Naive thymus-derived CD4-positive, alpha-beta T cell (primary cell): ENCODE measurements at regions of chr6 and their contacts with region 1.

Region 1: GRCh38 chr6:135535989-135536414 is 38.5 kb upstream of the AHI1 start:
- DNase-seq: peak in 7 of 9 donors; percentile 4 to 54 (median 36)
- ATAC-seq: peak; percentile 60
- H3K4me3 ChIP-seq: no peak overlapping the region
- H3K4me3 Mint-ChIP-seq: peak overlapping the region in 8 of 10 donors; percentile 48 to 80 (median 69)
- H3K27ac ChIP-seq: no peak overlapping the region
- H3K27ac Mint-ChIP-seq: peak overlapping the region in 3 of 9 donors; percentile 34 to 80 (median 41)
- H3K4me1 ChIP-seq: peaks cover 4 to 12% of the 10 kb centered on the region in 2 donors
- H3K4me1 Mint-ChIP-seq: peaks cover 0 to 46% (median 9%) of the 10 kb centered on the region in 7 donors
- H3K27me3 ChIP-seq: no peaks in the 10 kb centered on the region
- H3K27me3 Mint-ChIP-seq: peaks cover 0 to 4% (median 0%) of the 10 kb centered on the region in 5 donors

Region 2: DNA sequence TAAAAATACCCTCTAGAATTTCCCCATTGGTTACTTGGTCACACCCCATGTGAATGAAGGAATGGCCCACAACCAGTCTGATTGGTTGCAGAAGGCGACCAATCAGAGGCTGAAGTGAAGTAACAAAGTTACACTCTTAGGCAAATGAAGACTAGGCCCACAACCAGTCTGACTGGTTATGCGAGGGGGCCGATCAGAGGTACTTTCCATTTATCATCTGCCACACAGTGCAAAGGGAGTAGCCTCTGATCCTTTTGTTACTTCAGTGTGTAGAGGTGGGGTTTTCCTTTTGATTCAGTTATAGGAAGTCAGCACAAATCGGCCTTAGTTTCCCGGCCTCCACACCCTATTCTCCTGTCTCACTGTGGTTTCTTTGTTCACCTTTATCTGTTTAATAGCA is 1156.9 kb before region 1 on chr6:
- CTCF ChIA-PET with region 1: no interaction called
- POLR2A ChIA-PET with region 1: no interaction called
- intact Hi-C with region 1: no loop called
- DNase-seq: peak in 2 of 9 donors; percentile 38 to 39
- ATAC-seq: peak; percentile 78
- H3K4me3 ChIP-seq: no peak overlapping the region
- H3K4me3 Mint-ChIP-seq: peak overlapping the region in 5 of 10 donors; percentile 31 to 66 (median 43)
- H3K27ac ChIP-seq: no peak overlapping the region
- H3K27ac Mint-ChIP-seq: peak overlapping the region in 7 of 9 donors; percentile 26 to 84 (median 56)
- H3K4me1 ChIP-seq: peaks cover 14 to 17% of the 10 kb centered on the region in 2 donors
- H3K4me1 Mint-ChIP-seq: peaks cover 15 to 42% (median 41%) of the 10 kb centered on the region in 7 donors
- H3K27me3 ChIP-seq: no peaks in the 10 kb centered on the region
- H3K27me3 Mint-ChIP-seq: no peaks in the 10 kb centered on the region

Region 3: GRCh38 chr6:135280375-135281136 is 255.4 kb before region 1 on chr6:
- CTCF ChIA-PET with region 1: no interaction called
- POLR2A ChIA-PET with region 1: no interaction called
- intact Hi-C with region 1: no loop called
- DNase-seq: no peak
- ATAC-seq: peak; percentile 38
- H3K4me3 ChIP-seq: no peak overlapping the region
- H3K4me3 Mint-ChIP-seq: no peak overlapping the region
- H3K27ac ChIP-seq: no peak overlapping the region
- H3K27ac Mint-ChIP-seq: no peak overlapping the region
- H3K4me1 ChIP-seq: no peaks in the 10 kb centered on the region
- H3K4me1 Mint-ChIP-seq: peaks cover 0 to 5% (median 0%) of the 10 kb centered on the region in 7 donors
- H3K27me3 ChIP-seq: no peaks in the 10 kb centered on the region
- H3K27me3 Mint-ChIP-seq: peaks cover 0 to 18% (median 0%) of the 10 kb centered on the region in 5 donors

Region 4: GRCh38 chr6:135497412-135498269 is 38.4 kb before region 1 on chr6 and contains the start of gene AHI1:
- CTCF ChIA-PET with region 1: interaction called, 3 read pairs
- POLR2A ChIA-PET with region 1: interaction called, 3 read pairs
- intact Hi-C with region 1: loop called in 1 of 2 experiments (anchors 5 kb)
- DNase-seq: peak; percentile 65 to 94 (median 85)
- ATAC-seq: peak; percentile 89
- H3K4me3 ChIP-seq: peak within 1 kb of the TSS; percentile 64
- H3K4me3 Mint-ChIP-seq: peak within 1 kb of the TSS in 4 of 10 donors; percentile 32 to 53 (median 37)
- H3K27ac ChIP-seq: peak within 1 kb of the TSS; percentile 95
- H3K27ac Mint-ChIP-seq: no peak within 1 kb of the TSS
- H3K4me1 ChIP-seq: peaks cover 0 to 5% of the 10 kb centered on the region in 2 donors
- H3K4me1 Mint-ChIP-seq: peaks cover 4 to 19% (median 9%) of the 10 kb centered on the region in 7 donors
- H3K27me3 ChIP-seq: no peaks in the 10 kb centered on the region
- H3K27me3 Mint-ChIP-seq: peaks cover 0 to 3% (median 0%) of the 10 kb centered on the region in 5 donors
- total RNA-seq, gene AHI1: 12.5 to 31.3 (median 26.3) TPM

Region 5: GRCh38 chr6:135519348-135519747 is 16.7 kb before region 1 on chr6:
- CTCF ChIA-PET with region 1: no interaction called
- POLR2A ChIA-PET with region 1: no interaction called
- intact Hi-C with region 1: no loop called
- DNase-seq: no peak
- ATAC-seq: no peak
- H3K4me3 ChIP-seq: no peak overlapping the region
- H3K4me3 Mint-ChIP-seq: no peak overlapping the region
- H3K27ac ChIP-seq: no peak overlapping the region
- H3K27ac Mint-ChIP-seq: no peak overlapping the region
- H3K4me1 ChIP-seq: no peaks in the 10 kb centered on the region
- H3K4me1 Mint-ChIP-seq: peaks cover 0 to 11% (median 0%) of the 10 kb centered on the region in 7 donors
- H3K27me3 ChIP-seq: no peaks in the 10 kb centered on the region
- H3K27me3 Mint-ChIP-seq: no peaks in the 10 kb centered on the region

Region 6: DNA sequence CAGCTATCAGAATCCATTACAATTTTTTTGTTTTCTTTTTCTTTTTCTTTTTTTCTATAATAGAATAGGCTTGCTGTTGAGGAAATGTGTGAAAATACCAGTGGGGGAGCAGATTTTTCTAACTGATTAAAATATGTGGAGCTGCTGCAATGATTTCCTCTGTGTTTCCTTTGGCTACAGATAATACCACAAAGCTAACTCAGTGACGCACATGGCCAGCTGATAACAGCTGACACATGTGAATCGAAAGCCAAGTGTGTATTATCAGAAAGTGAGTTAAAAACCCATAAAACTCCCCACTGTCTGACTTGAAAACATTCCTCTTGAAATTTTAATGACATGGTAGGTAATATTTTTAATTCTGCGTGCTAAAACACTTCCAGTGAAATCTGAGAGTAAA is 32.4 kb after region 1 on chr6:
- CTCF ChIA-PET with region 1: no interaction called
- POLR2A ChIA-PET with region 1: no interaction called
- intact Hi-C with region 1: loop called in 1 of 2 experiments (anchors 1 kb)
- DNase-seq: peak in 8 of 9 donors; percentile 27 to 63 (median 44)
- ATAC-seq: peak; percentile 85
- H3K4me3 ChIP-seq: no peak overlapping the region
- H3K4me3 Mint-ChIP-seq: peak overlapping the region in 3 of 10 donors; percentile 5 to 57 (median 13)
- H3K27ac ChIP-seq: no peak overlapping the region
- H3K27ac Mint-ChIP-seq: peak overlapping the region in 4 of 9 donors; percentile 16 to 90 (median 18)
- H3K4me1 ChIP-seq: peaks cover 0 to 9% of the 10 kb centered on the region in 2 donors
- H3K4me1 Mint-ChIP-seq: peaks cover 0 to 77% (median 7%) of the 10 kb centered on the region in 7 donors
- H3K27me3 ChIP-seq: no peaks in the 10 kb centered on the region
- H3K27me3 Mint-ChIP-seq: no peaks in the 10 kb centered on the region

Region 7: DNA sequence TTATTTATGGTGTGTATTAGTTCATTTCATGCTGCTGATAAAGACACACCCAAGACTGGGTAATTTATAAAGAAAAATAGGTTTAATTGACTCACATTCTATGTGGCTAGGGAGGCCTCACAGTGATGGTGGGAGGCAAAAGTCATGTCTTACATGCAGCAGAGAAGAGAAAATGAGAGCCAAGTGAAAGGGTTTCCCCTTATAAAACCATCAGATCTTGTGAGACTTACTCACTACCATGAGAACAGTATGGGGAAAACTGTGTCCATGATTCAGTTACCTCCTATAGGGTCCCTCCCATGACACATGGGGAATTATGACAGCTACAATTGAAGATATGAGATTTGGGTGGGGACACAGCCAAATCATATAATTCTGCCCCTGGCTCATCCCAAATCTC is 111.5 kb after region 1 on chr6:
- CTCF ChIA-PET with region 1: no interaction called
- POLR2A ChIA-PET with region 1: no interaction called
- intact Hi-C with region 1: loop called in 1 of 2 experiments (anchors 2 kb)
- DNase-seq: no peak
- ATAC-seq: no peak
- H3K4me3 ChIP-seq: no peak overlapping the region
- H3K4me3 Mint-ChIP-seq: no peak overlapping the region
- H3K27ac ChIP-seq: no peak overlapping the region
- H3K27ac Mint-ChIP-seq: no peak overlapping the region
- H3K4me1 ChIP-seq: no peaks in the 10 kb centered on the region
- H3K4me1 Mint-ChIP-seq: peaks cover 0 to 39% (median 2%) of the 10 kb centered on the region in 7 donors
- H3K27me3 ChIP-seq: no peaks in the 10 kb centered on the region
- H3K27me3 Mint-ChIP-seq: no peaks in the 10 kb centered on the region

Region 8: DNA sequence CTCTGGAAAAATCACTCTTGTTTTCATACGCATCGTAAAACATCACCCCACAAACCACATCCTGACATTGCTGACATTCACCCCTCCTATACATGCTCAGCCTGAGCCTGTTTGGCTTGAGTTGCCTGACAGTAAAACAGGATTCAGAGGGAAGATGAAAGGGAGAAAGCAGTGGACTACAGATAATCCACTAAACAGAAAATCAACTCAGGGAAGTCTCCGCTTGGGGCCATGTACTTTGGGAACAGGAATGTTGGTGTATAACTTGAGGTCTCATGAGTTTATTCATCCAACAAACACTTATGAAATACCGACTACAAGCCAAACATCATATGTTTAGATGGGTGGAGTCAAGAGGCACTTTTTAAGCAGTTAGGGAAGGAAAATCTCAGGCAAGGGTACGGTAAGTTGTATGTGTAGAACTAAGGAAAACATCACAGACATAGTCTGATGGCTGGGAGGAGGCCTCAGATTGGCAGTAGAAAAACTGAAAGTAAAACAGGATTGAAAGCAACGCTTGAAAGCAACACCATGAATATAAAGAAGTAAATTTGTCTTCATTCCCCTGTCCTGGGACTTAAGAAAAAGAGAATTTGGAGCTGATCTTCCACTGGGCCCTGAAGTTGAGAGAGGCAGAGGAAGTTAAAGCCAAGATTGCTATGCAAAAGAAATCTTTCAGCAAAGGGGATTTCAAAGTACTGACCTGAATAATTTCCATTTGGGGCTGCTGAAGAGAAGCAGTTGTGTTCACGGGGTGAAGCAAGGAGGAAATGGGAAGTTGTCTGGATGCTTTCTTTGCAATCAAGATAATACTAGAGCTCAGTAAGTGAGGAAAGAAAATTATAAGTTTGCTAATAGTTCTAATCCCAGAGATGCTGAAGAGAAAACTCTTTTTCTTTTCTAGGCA is 344.3 kb after region 1 on chr6:
- CTCF ChIA-PET with region 1: no interaction called
- POLR2A ChIA-PET with region 1: no interaction called
- intact Hi-C with region 1: loop called in 1 of 2 experiments (anchors 1 kb)
- DNase-seq: peak in 8 of 9 donors; percentile 52 to 86 (median 79)
- ATAC-seq: peak; percentile 95
- H3K4me3 ChIP-seq: peak overlapping the region; percentile 40
- H3K4me3 Mint-ChIP-seq: peak overlapping the region; percentile 81 to 94 (median 86)
- H3K27ac ChIP-seq: peak overlapping the region; percentile 90
- H3K27ac Mint-ChIP-seq: peak overlapping the region; percentile 94 to 99 (median 98)
- H3K4me1 ChIP-seq: peaks cover 16 to 37% of the 10 kb centered on the region in 2 donors
- H3K4me1 Mint-ChIP-seq: peaks cover 31 to 90% (median 79%) of the 10 kb centered on the region in 7 donors
- H3K27me3 ChIP-seq: no peaks in the 10 kb centered on the region
- H3K27me3 Mint-ChIP-seq: no peaks in the 10 kb centered on the region

Region 9: DNA sequence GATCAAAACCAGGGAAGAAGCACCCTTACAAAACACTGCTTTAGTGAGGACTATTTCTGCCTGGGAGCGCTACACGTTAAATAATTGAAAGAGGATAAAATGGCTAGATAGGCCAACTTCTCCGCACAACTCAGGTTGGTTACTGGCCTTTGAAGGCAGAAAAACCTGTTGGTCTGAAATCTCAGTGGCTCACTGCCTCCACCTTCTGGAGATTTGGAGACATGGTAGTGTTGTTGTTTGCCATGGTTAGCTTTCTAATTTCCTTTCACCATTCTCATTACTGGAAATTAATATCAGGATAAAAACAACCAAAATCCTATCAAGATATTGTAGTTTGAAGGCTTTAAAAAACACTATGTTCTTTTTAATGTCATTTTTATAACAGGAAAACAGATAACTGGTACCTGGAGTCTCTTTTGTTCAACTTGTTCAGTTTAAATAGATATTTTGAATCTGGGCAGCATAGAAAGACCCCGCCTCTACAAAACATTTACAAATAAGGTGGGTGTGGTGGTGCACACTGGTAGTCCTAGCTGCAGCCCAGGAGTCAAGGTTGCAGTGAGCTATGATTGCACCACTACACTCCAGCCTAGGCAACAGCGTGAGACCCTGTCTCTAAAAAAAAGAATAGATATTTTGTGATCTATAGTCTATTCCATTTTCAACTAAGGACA is 781.2 kb after region 1 on chr6:
- CTCF ChIA-PET with region 1: interaction called, 3 read pairs
- POLR2A ChIA-PET with region 1: no interaction called
- intact Hi-C with region 1: loop called in 1 of 2 experiments (anchors 1 kb)
- DNase-seq: peak; percentile 25 to 77 (median 66)
- ATAC-seq: peak; percentile 91
- H3K4me3 ChIP-seq: no peak overlapping the region
- H3K4me3 Mint-ChIP-seq: no peak overlapping the region
- H3K27ac ChIP-seq: no peak overlapping the region
- H3K27ac Mint-ChIP-seq: peak overlapping the region in 1 of 9 donors; percentile 19
- H3K4me1 ChIP-seq: no peaks in the 10 kb centered on the region
- H3K4me1 Mint-ChIP-seq: peaks cover 0 to 5% (median 0%) of the 10 kb centered on the region in 7 donors
- H3K27me3 ChIP-seq: no peaks in the 10 kb centered on the region
- H3K27me3 Mint-ChIP-seq: peaks cover 0 to 19% (median 0%) of the 10 kb centered on the region in 5 donors